CD8-positive, alpha-beta T cell (primary cell): ENCODE measurements at regions of chr12 and their contacts with region 1.

Region 1: GRCh38 chr12:30806989-30807694 is 52.4 kb upstream of the CAPRIN2 start:
- DNase-seq: peak in 4 of 9 experiments; percentile 17 to 75 (median 60)
- ATAC-seq: peak; percentile 68
- H3K4me3 ChIP-seq: no peak overlapping the region
- H3K4me3 Mint-ChIP-seq: no peak overlapping the region
- H3K27ac ChIP-seq: no peak overlapping the region
- H3K27ac Mint-ChIP-seq: no peak overlapping the region
- H3K4me1 ChIP-seq: no peaks in the 10 kb centered on the region
- H3K4me1 Mint-ChIP-seq: no peaks in the 10 kb centered on the region
- H3K27me3 ChIP-seq: peaks cover 0 to 4% of the 10 kb centered on the region in 2 experiments
- H3K27me3 Mint-ChIP-seq: peaks cover 25% of the 10 kb centered on the region
- CTCF ChIP-seq: peak; percentile 82

Region 2: DNA sequence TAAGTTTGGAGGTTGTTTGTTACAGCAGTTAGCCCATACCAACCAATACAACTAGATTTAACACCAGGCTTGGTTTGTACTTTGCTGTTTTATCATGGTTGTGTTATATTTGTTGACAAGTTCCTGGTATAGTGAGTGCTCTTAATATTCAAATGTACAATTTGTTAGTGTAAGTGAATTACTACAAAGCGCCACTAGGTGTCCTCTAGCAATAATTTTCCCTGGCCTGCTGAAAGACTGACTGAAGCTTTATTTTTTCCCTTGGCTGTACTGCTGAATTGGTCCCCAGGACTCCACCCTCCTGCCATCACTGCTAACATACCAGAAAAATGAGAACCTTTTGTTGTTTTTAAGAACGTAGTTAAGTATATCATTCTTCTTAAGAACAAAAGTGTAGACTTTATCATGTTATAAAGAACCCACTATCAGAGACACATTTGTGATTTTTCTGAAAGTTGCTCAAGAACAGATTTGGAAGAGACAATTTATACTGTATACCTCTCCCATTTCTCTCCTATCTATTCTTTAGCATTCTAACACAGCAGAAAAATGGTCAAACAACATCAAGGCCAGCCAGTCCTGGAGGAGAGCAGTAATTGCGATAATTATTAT is 1733.4 kb before region 1 on chr12:
- CTCF ChIA-PET with region 1: interaction called, 3 read pairs
- POLR2A ChIA-PET with region 1: no interaction called
- intact Hi-C with region 1: loop called in 1 of 2 experiments (anchors 5 kb)
- DNase-seq: peak in 3 of 9 experiments; percentile 1 to 58 (median 47)
- ATAC-seq: peak; percentile 64
- H3K4me3 ChIP-seq: no peak overlapping the region
- H3K4me3 Mint-ChIP-seq: no peak overlapping the region
- H3K27ac ChIP-seq: no peak overlapping the region
- H3K27ac Mint-ChIP-seq: no peak overlapping the region
- H3K4me1 ChIP-seq: no peaks in the 10 kb centered on the region
- H3K4me1 Mint-ChIP-seq: no peaks in the 10 kb centered on the region
- H3K27me3 ChIP-seq: peaks cover 3% of the 10 kb centered on the region in 2 experiments
- H3K27me3 Mint-ChIP-seq: peaks cover 20% of the 10 kb centered on the region
- CTCF ChIP-seq: peak; percentile 84

Region 3: DNA sequence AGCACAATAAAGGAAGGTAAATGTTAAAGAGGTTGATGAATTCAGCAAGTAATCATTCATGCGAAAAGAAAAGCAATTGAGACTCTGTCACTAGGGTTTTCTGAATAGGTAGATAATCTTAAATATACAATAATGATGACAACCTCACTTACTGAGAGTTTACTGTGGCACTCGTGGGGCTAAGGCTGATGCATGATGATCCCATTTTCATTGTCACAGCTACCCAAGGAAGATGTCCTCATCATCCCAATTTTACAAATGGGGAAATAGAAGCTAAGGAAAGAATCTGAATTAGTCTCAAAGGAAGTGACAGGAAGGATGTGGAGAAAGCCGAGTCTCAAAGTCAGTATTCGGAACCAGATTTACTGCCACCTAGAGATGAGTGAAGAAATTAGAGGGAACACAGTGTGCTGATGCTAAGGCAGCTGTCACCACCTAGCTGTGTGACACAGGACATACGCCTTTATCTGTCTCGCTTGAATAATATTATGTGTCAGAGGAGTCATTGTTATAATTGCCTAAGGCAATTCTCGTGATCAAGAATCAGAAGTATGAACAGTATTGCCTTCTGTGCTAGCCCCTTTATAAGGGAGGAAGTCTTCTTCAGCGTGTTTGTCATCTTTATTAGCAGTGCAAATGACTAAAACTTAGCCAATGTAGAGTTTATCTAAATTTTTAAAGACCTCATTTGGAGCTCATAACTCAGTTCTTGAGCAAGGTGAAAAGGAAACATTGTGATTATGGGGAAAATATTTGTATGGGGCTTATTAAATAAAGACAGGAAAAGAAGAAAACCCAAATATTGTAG is 1489.4 kb before region 1 on chr12:
- CTCF ChIA-PET with region 1: no interaction called
- POLR2A ChIA-PET with region 1: no interaction called
- intact Hi-C with region 1: loop called in 1 of 2 experiments (anchors 10 kb)
- DNase-seq: peak in 8 of 9 experiments; percentile 3 to 79 (median 39)
- ATAC-seq: peak; percentile 98
- H3K4me3 ChIP-seq: no peak overlapping the region
- H3K4me3 Mint-ChIP-seq: no peak overlapping the region
- H3K27ac ChIP-seq: no peak overlapping the region
- H3K27ac Mint-ChIP-seq: no peak overlapping the region
- H3K4me1 ChIP-seq: no peaks in the 10 kb centered on the region
- H3K4me1 Mint-ChIP-seq: peaks cover 8% of the 10 kb centered on the region
- H3K27me3 ChIP-seq: no peaks in the 10 kb centered on the region
- H3K27me3 Mint-ChIP-seq: no peaks in the 10 kb centered on the region
- CTCF ChIP-seq: peak; percentile 75

Region 4: DNA sequence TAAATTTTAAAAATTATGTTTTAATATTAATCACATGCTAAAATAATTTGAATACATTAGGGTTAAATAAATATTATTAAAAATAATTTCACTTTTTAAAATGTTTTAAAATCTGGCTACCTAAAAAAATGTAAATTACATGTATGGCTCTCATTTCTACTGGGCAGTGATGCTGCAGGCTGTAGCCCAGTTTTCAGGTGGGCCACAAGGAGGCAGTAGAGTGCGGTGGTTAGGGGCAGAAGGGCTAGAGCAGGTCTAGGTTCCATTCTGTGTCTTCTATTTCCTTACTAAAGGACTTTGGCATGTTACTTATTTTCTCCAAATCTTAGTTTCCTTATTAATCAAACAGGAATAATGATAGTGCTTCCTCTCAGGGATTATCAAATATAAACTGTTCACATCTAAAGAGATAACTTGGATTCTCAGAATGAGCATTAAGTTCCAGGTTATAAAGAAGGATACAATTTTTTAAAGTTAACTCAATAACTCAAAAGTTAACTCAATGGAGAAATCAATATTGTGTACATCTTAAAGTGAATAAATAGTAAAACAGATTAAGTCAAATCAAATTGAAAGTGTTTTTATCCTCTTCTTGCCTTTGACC is 1254.7 kb before region 1 on chr12:
- CTCF ChIA-PET with region 1: interaction called, 24 read pairs
- POLR2A ChIA-PET with region 1: interaction called, 3 read pairs
- intact Hi-C with region 1: loop called (anchors 1 kb)
- DNase-seq: peak; percentile 7 to 63 (median 61)
- ATAC-seq: peak; percentile 63
- H3K4me3 ChIP-seq: no peak overlapping the region
- H3K4me3 Mint-ChIP-seq: no peak overlapping the region
- H3K27ac ChIP-seq: no peak overlapping the region
- H3K27ac Mint-ChIP-seq: no peak overlapping the region
- H3K4me1 ChIP-seq: no peaks in the 10 kb centered on the region
- H3K4me1 Mint-ChIP-seq: no peaks in the 10 kb centered on the region
- H3K27me3 ChIP-seq: no peaks in the 10 kb centered on the region
- H3K27me3 Mint-ChIP-seq: peaks cover 3% of the 10 kb centered on the region
- CTCF ChIP-seq: peak; percentile 81

Region 5: GRCh38 chr12:30754709-30755394 is 52.3 kb before region 1 on chr12 and contains the start of gene CAPRIN2:
- CTCF ChIA-PET with region 1: interaction called, 15 read pairs
- POLR2A ChIA-PET with region 1: no interaction called
- intact Hi-C with region 1: loop called (anchors 1 to 2 kb)
- DNase-seq: peak; percentile 89 to 98 (median 93)
- ATAC-seq: peak; percentile 90
- H3K4me3 ChIP-seq: peak within 1 kb of the TSS; percentile 69 to 74
- H3K4me3 Mint-ChIP-seq: peak within 1 kb of the TSS; percentile 92
- H3K27ac ChIP-seq: peak within 1 kb of the TSS; percentile 66 to 69
- H3K27ac Mint-ChIP-seq: peak within 1 kb of the TSS; percentile 86
- H3K4me1 ChIP-seq: peaks cover 19% of the 10 kb centered on the region
- H3K4me1 Mint-ChIP-seq: peaks cover 44% of the 10 kb centered on the region
- H3K27me3 ChIP-seq: no peaks in the 10 kb centered on the region
- H3K27me3 Mint-ChIP-seq: no peaks in the 10 kb centered on the region
- CTCF ChIP-seq: no peak
- total RNA-seq, gene CAPRIN2: 16.2 to 17.4 TPM

Region 6: DNA sequence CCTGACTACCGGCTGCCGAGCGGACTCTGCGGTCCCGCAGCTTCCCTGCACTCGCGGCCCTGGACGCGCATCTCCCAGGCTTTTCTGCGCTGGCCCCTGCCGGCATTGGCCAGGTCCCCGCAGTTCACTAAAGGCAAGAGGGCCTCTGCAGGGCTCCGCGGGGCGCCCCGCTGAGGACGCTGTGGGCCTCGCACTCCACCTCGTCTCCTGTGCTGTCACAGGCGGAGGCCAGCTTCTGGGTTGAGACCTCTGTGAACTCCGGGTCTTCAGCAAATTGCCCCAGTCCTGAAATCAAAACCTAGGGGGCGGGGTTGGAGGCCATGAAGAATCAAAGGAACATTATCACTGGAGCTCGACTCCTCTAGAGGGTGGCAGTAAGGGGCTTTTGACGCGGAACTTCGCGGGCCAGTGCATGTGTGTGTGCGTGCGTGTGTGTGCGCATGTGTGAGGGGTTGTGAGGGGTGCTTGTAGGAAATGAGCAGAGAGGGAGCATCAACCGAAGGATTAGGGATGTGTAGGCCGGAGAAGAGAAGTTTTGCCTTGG is 16.1 kb after region 1 on chr12:
- CTCF ChIA-PET with region 1: interaction called, 14 read pairs
- POLR2A ChIA-PET with region 1: no interaction called
- intact Hi-C with region 1: no loop called
- DNase-seq: peak in 7 of 9 experiments; percentile 9 to 62 (median 37)
- ATAC-seq: peak; percentile 79
- H3K4me3 ChIP-seq: peak overlapping the region; percentile 48 to 64
- H3K4me3 Mint-ChIP-seq: peak overlapping the region; percentile 91
- H3K27ac ChIP-seq: no peak overlapping the region
- H3K27ac Mint-ChIP-seq: no peak overlapping the region
- H3K4me1 ChIP-seq: peaks cover 5% of the 10 kb centered on the region
- H3K4me1 Mint-ChIP-seq: peaks cover 18% of the 10 kb centered on the region
- H3K27me3 ChIP-seq: no peaks in the 10 kb centered on the region
- H3K27me3 Mint-ChIP-seq: peaks cover 56% of the 10 kb centered on the region
- CTCF ChIP-seq: no peak